ENCODE measurements at regions of chr14 and their contacts with region 1.

Region 1: DNA sequence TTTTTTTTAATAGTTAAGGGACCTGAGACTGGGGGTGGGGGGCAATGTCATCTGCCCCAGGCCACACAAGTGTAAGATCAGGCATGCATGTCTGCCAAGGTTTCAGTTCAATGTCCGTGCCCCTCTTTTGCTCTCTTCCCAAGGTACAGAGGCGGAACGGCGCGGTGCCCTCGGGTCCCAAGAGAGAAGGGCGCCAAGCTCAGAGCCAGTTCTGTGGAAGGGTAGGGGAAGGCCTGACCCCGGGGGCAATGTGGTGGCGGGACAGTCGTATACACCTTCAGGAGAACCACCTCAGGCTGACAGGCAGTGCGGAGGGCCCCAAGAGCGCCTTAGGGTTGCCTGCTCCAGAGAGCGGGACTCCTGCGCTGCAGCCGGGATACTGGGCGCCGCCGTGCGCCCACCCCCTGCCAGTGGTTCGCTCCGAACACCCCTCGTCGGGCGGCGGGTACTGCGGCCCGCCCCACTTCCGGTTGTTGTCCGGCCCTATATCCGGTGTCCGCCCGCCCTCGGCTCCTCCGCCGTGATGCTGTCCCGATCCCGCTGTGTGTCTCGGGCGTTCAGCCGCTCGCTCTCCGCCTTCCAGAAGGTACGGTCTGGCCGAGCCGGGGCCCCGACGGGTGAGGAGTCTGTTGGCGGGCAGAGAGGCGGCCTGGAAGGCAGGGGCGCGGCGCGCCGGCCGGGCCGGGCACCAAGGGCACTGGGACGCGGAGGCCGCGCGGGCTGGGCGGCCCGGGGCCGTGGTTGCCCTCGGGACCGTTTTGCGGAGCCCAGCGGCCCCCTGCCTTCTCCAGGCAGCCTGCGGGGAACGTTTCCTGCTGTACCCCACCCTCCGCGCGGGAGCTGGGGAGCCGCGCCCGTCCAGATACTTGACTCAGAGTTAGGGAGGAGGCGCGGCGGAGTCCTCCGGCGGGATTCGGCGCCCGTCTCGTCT is at the start of gene DLST:
- DNase-seq: peak; percentile 57 to 90 (median 74)
- ATAC-seq: peak; percentile 83 to 92 (median 90)
- H3K4me3 ChIP-seq: peak within 1 kb of the TSS; percentile 92 to 94
- H3K4me3 Mint-ChIP-seq: peak within 1 kb of the TSS; percentile 93 to 100 (median 97)
- H3K27ac ChIP-seq: peak within 1 kb of the TSS; percentile 89
- H3K27ac Mint-ChIP-seq: peak within 1 kb of the TSS; percentile 98
- H3K4me1 ChIP-seq: peaks cover 15 to 50% of the 10 kb centered on the region in 2 experiments
- H3K4me1 Mint-ChIP-seq: peaks cover 65 to 69% (median 67%) of the 10 kb centered on the region in 3 donors
- H3K27me3 ChIP-seq: no peaks in the 10 kb centered on the region
- H3K27me3 Mint-ChIP-seq: no peaks in the 10 kb centered on the region
- total RNA-seq, gene DLST: 88.3 to 128 (median 102) TPM

Region 2: DNA sequence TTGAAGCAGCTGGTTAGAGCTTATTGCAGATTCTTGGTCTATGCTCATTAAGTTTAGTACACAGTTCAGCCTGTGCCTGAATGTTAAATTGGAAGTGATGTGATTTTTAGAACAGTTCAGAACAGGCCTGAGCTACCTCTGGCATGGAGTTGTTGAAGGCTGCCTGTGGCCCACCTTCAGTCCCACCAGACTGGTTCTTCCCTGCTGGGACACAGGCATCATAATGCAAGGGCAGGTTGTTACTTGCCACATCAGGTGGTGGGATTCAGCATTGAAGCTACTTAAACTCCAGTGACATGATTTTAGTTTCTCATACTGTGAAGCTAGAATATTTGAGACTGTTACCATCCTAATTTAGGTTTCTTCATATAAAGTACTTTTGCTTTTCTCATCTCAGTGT is 55.1 kb before region 1 on chr14:
- CTCF ChIA-PET with region 1: no interaction called
- POLR2A ChIA-PET with region 1: no interaction called
- DNase-seq: no peak
- ATAC-seq: no peak
- H3K4me3 ChIP-seq: no peak overlapping the region
- H3K4me3 Mint-ChIP-seq: no peak overlapping the region
- H3K27ac ChIP-seq: no peak overlapping the region
- H3K27ac Mint-ChIP-seq: peak overlapping the region in 1 of 2 donors; percentile 60
- H3K4me1 ChIP-seq: no peaks in the 10 kb centered on the region
- H3K4me1 Mint-ChIP-seq: peaks cover 0 to 11% (median 9%) of the 10 kb centered on the region in 3 donors
- H3K27me3 ChIP-seq: no peaks in the 10 kb centered on the region
- H3K27me3 Mint-ChIP-seq: no peaks in the 10 kb centered on the region

Region 3: GRCh38 chr14:74867673-74868072 is 14.0 kb before region 1 on chr14:
- CTCF ChIA-PET with region 1: interaction called, 10 to 41 read pairs
- POLR2A ChIA-PET with region 1: interaction called in 1 of 2 experiments, 4 read pairs
- DNase-seq: peak in 32 of 35 experiments; percentile 6 to 56 (median 28)
- ATAC-seq: peak; percentile 88 to 97 (median 95)
- H3K4me3 ChIP-seq: no peak overlapping the region
- H3K4me3 Mint-ChIP-seq: peak overlapping the region in 2 of 3 donors; percentile 37 to 48
- H3K27ac ChIP-seq: peak overlapping the region; percentile 46
- H3K27ac Mint-ChIP-seq: peak overlapping the region; percentile 80 to 91
- H3K4me1 ChIP-seq: peaks cover 11 to 13% of the 10 kb centered on the region in 2 experiments
- H3K4me1 Mint-ChIP-seq: peaks cover 21 to 26% (median 23%) of the 10 kb centered on the region in 3 donors
- H3K27me3 ChIP-seq: no peaks in the 10 kb centered on the region
- H3K27me3 Mint-ChIP-seq: no peaks in the 10 kb centered on the region

Region 4: DNA sequence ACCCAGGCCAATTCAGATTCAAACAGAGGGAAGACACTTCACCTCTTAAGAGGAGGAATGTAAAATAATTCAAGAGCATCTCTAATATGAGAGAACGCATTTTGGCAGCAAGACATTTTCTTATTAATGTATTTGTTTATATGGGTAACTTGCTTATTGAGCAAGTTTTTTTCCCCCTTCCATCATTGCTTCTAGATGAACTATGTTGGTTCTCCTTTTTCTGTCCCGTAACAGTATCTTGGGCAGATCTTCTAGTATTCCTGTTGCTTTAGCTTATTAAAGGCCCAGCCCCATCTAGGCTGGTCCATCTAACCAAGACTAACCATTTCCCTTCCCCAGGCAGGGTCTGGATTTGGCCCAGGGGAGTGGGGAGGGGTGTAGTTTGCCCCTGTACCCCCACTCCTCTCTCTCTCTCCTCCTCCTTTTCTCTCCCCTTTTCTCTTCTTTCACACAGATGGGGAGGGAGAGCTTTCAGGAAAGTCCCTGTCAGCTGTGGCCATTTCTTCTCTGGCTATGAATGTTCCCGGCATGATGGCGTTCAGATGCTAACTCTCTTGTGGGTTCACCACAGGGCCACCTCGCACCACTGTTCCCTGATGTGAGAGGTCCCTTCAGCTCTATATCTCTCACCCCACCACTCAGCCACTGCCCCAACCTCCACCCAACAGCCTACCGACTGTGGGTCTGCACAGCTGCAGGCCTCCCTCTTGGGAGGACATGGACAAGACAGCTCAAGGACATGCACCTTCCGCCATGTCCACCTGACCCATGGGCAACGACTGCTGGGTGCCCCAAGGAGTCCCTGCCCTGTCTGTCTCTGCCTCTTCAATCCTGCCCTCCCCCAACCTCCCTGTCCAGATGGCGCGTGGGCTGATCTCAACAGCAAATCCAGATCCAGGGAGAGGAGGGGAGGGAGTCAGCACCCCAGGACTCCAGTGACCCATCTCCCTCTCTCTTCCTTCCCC is 57.1 kb after region 1 on chr14:
- CTCF ChIA-PET with region 1: no interaction called
- POLR2A ChIA-PET with region 1: interaction called in 1 of 2 experiments, 16 read pairs
- DNase-seq: no peak
- ATAC-seq: no peak
- H3K4me3 ChIP-seq: no peak overlapping the region
- H3K4me3 Mint-ChIP-seq: no peak overlapping the region
- H3K27ac ChIP-seq: no peak overlapping the region
- H3K27ac Mint-ChIP-seq: no peak overlapping the region
- H3K4me1 ChIP-seq: peaks cover 4 to 33% of the 10 kb centered on the region in 2 experiments
- H3K4me1 Mint-ChIP-seq: peaks cover 36 to 56% (median 42%) of the 10 kb centered on the region in 3 donors
- H3K27me3 ChIP-seq: peaks cover 0 to 8% of the 10 kb centered on the region in 2 experiments
- H3K27me3 Mint-ChIP-seq: no peaks in the 10 kb centered on the region